ENCODE measurements at regions of chr2 and their contacts with region 1.

Region 1: DNA sequence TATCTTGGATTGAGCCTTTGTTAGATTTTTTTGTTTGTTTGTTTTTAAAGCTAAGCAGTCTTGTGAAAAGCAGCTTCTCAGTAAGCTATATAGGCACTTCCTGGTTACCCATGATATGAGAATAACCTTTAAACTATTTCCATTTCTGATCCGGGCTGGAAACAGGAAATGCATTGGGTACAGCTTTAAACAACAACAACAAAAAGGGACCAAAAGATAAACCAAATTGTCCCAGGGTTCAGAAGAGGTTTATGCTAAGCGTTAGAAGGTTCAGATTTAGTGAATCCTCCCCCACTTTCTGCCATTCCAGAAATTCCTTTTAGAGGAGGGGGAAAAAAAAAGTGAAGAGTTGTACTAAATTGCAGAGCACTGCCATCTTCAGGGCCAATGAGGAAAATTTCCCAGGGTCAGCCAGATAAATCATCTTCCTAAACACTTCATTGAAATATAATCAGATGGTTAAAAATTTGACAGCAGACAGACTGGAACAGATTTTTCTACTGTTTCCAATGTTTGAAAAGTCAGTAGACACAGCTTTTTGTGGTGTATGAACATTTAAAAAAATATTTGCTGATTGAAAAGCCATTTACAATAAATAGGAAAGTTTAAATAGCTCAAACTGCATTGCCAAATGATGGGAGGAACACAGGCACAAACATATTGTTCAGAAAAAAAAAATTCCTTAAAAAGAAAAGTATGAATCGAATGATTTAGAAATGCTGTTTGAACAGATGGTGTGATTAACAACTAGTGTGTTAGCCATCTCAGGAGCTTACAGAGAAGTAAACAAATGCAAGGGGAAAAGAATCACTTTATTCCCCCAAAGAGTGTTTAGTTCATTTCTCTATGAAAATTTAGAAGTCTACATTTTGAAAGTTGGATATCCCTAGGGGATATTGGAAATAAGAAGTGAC is 189.9 kb upstream of the TANK start:
- DNase-seq: peak in 4 of 5 donors; percentile 15 to 26 (median 20)
- H3K4me3 ChIP-seq: no peak overlapping the region
- H3K4me3 Mint-ChIP-seq: peak overlapping the region in 1 of 8 donors; percentile 26
- H3K27ac ChIP-seq: no peak overlapping the region
- H3K27ac Mint-ChIP-seq: peak overlapping the region in 2 of 7 donors; percentile 7 to 10
- H3K4me1 ChIP-seq: no peaks in the 10 kb centered on the region
- H3K4me1 Mint-ChIP-seq: peaks cover 1 to 4% (median 3%) of the 10 kb centered on the region in 4 donors
- H3K27me3 ChIP-seq: no peaks in the 10 kb centered on the region
- H3K27me3 Mint-ChIP-seq: peaks cover 0 to 1% of the 10 kb centered on the region in 2 donors

Region 2: DNA sequence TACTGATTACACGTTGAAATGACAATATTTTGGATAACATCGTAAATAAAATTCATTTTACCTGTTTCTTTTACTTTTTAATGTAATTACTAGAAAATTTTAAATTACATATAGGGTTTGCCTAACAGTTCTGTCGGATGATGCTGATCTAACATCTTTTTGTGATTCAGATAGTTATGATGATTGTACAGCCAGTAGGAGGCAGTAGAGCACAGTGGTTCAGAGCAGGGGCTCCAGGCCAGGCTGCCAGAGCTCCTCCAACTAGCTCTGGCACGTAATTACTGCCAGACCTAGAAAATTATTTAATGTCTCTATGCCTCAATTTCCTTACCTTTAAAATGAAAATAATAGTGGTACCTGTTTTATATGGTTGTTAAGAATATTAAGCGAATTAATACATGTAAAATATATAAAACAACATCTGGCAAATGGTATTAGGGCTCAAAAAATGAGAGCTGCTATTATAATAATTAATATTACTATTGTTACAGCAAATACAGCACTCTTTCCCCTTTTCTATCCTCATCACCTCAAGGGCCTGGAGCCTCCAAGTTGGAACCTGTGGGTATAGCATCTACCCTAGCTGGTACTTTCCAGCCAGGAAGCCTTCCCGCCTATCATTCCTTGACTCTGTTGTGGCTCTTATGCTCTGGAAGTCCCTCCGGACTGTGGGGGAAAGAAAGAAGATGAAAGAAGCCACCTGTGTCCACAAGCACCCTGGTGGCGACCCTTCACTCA is 860.2 kb before region 1 on chr2:
- CTCF ChIA-PET with region 1: interaction called, 10 read pairs
- POLR2A ChIA-PET with region 1: no interaction called
- intact Hi-C with region 1: no loop called
- DNase-seq: peak; percentile 49 to 60 (median 55)
- H3K4me3 ChIP-seq: no peak overlapping the region
- H3K4me3 Mint-ChIP-seq: no peak overlapping the region
- H3K27ac ChIP-seq: no peak overlapping the region
- H3K27ac Mint-ChIP-seq: no peak overlapping the region
- H3K4me1 ChIP-seq: no peaks in the 10 kb centered on the region
- H3K4me1 Mint-ChIP-seq: no peaks in the 10 kb centered on the region
- H3K27me3 ChIP-seq: no peaks in the 10 kb centered on the region
- H3K27me3 Mint-ChIP-seq: peaks cover 11 to 16% of the 10 kb centered on the region in 2 donors

Region 3: DNA sequence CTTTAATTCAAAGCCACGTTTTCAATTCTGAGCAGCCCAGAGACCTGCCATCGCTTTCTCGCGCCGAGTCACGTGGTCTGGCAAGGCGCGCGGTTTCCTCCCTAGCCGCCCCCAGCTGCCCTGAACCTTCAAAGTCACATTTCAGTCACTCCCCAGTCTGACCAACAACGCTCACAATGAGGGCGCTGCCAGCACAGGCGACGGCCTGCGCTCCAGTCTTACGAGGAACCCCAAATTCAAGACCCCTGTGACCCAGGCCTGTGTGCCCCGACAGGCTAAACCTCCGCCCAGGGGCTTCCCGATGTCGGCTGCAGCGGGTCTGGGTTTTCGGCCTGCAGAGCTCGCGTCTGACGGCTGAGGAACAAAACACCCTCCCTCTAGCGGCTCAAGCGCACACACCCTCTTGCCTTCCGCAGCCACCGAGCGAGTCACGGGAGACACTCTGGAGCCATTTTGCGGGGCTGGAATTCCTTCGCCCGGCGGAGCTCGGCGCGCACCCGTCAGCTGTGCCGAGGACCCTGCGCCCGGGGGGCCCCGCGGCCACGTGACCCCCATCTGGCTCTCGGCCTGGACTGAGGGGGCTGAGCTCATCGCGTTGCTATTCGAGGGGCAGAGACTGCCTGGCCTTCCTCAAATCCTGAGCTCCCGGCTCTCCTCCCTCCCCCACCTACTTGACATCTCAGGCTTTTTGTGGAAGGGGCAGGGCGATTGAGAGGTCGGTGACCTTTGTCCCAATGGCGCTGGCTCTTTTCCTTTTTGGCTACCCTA is 700.3 kb before region 1 on chr2:
- CTCF ChIA-PET with region 1: interaction called, 11 read pairs
- POLR2A ChIA-PET with region 1: no interaction called
- intact Hi-C with region 1: no loop called
- DNase-seq: peak; percentile 64 to 75 (median 69)
- H3K4me3 ChIP-seq: peak overlapping the region; percentile 30 to 59
- H3K4me3 Mint-ChIP-seq: peak overlapping the region; percentile 81 to 90 (median 87)
- H3K27ac ChIP-seq: peak overlapping the region; percentile 64
- H3K27ac Mint-ChIP-seq: peak overlapping the region; percentile 91 to 97 (median 94)
- H3K4me1 ChIP-seq: peaks cover 29% of the 10 kb centered on the region
- H3K4me1 Mint-ChIP-seq: peaks cover 20 to 48% (median 32%) of the 10 kb centered on the region in 4 donors
- H3K27me3 ChIP-seq: no peaks in the 10 kb centered on the region
- H3K27me3 Mint-ChIP-seq: no peaks in the 10 kb centered on the region

Region 4: GRCh38 chr2:160353166-160353565 is 617.1 kb before region 1 on chr2:
- CTCF ChIA-PET with region 1: interaction called, 17 read pairs
- POLR2A ChIA-PET with region 1: no interaction called
- intact Hi-C with region 1: loop called (anchors 2 kb)
- DNase-seq: peak in 4 of 5 donors; percentile 26 to 37 (median 32)
- H3K4me3 ChIP-seq: no peak overlapping the region
- H3K4me3 Mint-ChIP-seq: peak overlapping the region in 2 of 8 donors; percentile 4 to 45
- H3K27ac ChIP-seq: no peak overlapping the region
- H3K27ac Mint-ChIP-seq: peak overlapping the region in 2 of 7 donors; percentile 44 to 67
- H3K4me1 ChIP-seq: peaks cover 27% of the 10 kb centered on the region
- H3K4me1 Mint-ChIP-seq: peaks cover 50 to 87% (median 73%) of the 10 kb centered on the region in 4 donors
- H3K27me3 ChIP-seq: no peaks in the 10 kb centered on the region
- H3K27me3 Mint-ChIP-seq: no peaks in the 10 kb centered on the region

Region 5: GRCh38 chr2:160630801-160631590 is 339.3 kb before region 1 on chr2:
- CTCF ChIA-PET with region 1: no interaction called
- POLR2A ChIA-PET with region 1: no interaction called
- intact Hi-C with region 1: no loop called
- DNase-seq: no peak
- H3K4me3 ChIP-seq: no peak overlapping the region
- H3K4me3 Mint-ChIP-seq: no peak overlapping the region
- H3K27ac ChIP-seq: no peak overlapping the region
- H3K27ac Mint-ChIP-seq: no peak overlapping the region
- H3K4me1 ChIP-seq: no peaks in the 10 kb centered on the region
- H3K4me1 Mint-ChIP-seq: peaks cover 0 to 3% (median 0%) of the 10 kb centered on the region in 4 donors
- H3K27me3 ChIP-seq: no peaks in the 10 kb centered on the region
- H3K27me3 Mint-ChIP-seq: no peaks in the 10 kb centered on the region

Measured in CD4-positive, alpha-beta memory T cell (primary cell).